ENCODE measurements at regions of chr4 and their contacts with region 1.

Region 1: DNA sequence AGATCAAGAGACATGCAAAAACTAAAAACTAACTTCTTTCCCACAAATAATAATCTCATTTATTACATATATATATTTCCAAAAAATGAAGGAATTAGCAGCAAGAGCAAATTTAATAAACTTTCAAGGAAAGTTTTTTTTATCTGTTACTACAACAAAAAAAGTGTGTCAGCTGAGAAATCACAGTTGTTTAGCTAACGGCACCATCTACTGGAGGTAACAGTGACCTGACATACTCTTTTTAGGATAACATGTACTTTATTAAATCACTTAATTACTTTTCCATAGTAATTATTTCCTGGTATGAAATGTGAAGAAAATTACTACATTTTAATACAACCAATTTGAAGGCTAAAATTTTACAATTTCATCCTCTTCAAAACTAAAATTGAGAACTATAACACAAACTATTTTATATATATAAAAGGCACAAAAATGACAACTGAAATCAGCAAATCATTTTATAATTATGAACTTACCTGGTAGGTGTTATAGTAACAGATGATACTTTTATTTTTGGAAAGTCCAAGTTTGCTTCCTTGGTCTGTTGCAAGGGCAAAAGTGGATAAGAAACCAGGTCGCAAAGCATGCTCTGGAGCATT is 9.1 kb downstream of the LAMTOR3 start:
- DNase-seq: no peak
- H3K4me3 Mint-ChIP-seq: no peak overlapping the region
- H3K27ac Mint-ChIP-seq: no peak overlapping the region
- H3K4me1 Mint-ChIP-seq: peaks cover 4% of the 10 kb centered on the region
- H3K27me3 Mint-ChIP-seq: no peaks in the 10 kb centered on the region

Region 2: GRCh38 chr4:99462875-99463464 is 422.2 kb before region 1 on chr4:
- intact Hi-C with region 1: loop called (anchors 2 kb)
- DNase-seq: peak; percentile 37
- H3K4me3 Mint-ChIP-seq: no peak overlapping the region
- H3K27ac Mint-ChIP-seq: no peak overlapping the region
- H3K4me1 Mint-ChIP-seq: no peaks in the 10 kb centered on the region
- H3K27me3 Mint-ChIP-seq: peaks cover 11% of the 10 kb centered on the region

Region 3: GRCh38 chr4:99723612-99724011 is 161.6 kb before region 1 on chr4:
- intact Hi-C with region 1: loop called (anchors 5 kb)
- DNase-seq: no peak
- H3K4me3 Mint-ChIP-seq: no peak overlapping the region
- H3K27ac Mint-ChIP-seq: no peak overlapping the region
- H3K4me1 Mint-ChIP-seq: no peaks in the 10 kb centered on the region
- H3K27me3 Mint-ChIP-seq: peaks cover 5% of the 10 kb centered on the region

Region 4: GRCh38 chr4:99808260-99808857 is 76.8 kb before region 1 on chr4:
- intact Hi-C with region 1: loop called (anchors 1 kb)
- DNase-seq: peak; percentile 63
- H3K4me3 Mint-ChIP-seq: no peak overlapping the region
- H3K27ac Mint-ChIP-seq: no peak overlapping the region
- H3K4me1 Mint-ChIP-seq: peaks cover 16% of the 10 kb centered on the region
- H3K27me3 Mint-ChIP-seq: peaks cover 11% of the 10 kb centered on the region

Region 5: DNA sequence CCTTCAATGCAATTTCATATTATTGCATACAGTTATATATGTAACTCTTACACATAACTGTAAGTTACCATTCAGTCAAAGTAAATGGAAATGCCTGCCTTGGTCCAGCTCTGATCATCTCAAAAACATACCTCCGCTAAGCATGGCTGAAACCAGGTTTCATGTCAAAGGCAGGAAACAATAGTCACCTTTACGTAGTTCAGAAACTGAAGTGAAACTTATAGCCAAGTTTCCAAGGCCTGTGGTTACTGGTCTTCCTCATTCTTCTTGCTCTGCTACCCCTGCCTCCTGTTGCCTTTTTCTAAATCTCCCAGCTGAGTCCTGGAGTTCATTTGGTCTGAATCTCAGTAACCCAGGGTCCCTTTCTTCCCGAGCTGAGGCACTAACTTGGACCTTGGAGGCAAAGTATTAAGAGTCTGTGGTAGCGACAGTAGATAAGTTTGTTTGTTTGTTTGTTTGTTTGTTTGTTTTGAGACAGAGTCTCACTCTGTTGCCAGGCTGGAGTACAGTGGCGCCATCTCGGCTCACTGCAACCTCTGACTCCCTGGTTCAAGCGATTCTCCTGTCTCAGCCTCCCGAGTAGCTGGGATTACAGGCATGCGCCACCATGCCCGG is 37.7 kb before region 1 on chr4:
- intact Hi-C with region 1: loop called (anchors 2 kb)
- DNase-seq: no peak
- H3K4me3 Mint-ChIP-seq: peak overlapping the region; percentile 59
- H3K27ac Mint-ChIP-seq: peak overlapping the region; percentile 95
- H3K4me1 Mint-ChIP-seq: peaks cover 83% of the 10 kb centered on the region
- H3K27me3 Mint-ChIP-seq: no peaks in the 10 kb centered on the region

Region 6: GRCh38 chr4:100679926-100680325 is 794.8 kb after region 1 on chr4:
- intact Hi-C with region 1: no loop called
- DNase-seq: no peak
- H3K4me3 Mint-ChIP-seq: no peak overlapping the region
- H3K27ac Mint-ChIP-seq: no peak overlapping the region
- H3K4me1 Mint-ChIP-seq: no peaks in the 10 kb centered on the region
- H3K27me3 Mint-ChIP-seq: peaks cover 3% of the 10 kb centered on the region

Measured in activated T-helper 1 cell treated with anti-CD3 and anti-CD28 coated beads, Interleukin-12 subunit alpha, Interleukin-12 subunit beta, Interleukin-2, Interleukin-4 antibody, amounts not matched to agents 30 ng/mL and 10 ng/mL and 1 ng/mL, durations not matched to agents 14 hours and 24 hours and 36 hours (primary cell).